Naive thymus-derived CD8-positive, alpha-beta T cell (primary cell): ENCODE measurements at regions of chr2 and their contacts with region 1.

Region 1: DNA sequence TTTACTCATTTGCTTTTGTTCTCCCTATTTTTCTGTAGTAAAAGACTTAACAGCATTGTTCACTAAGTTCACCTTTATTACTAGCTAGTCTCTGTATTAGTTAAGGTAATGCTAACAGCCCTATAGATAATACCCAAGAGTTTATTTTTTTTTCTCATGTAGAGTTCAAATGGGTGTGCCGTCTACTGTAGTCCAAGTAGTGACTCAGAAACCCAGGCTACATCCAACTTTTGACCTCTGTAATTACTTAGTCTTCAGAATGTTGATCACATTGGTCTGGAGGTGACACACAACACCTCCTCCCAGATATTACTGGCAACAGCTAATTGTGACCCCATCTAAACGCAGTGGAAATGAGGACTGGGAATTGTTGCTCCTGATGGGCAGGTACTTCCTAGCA is 7.7 kb downstream of the COQ10B start:
- DNase-seq: no peak
- ATAC-seq: no peak
- H3K4me3 Mint-ChIP-seq: no peak overlapping the region
- H3K27ac Mint-ChIP-seq: peak overlapping the region in 1 of 10 donors; percentile 53
- H3K4me1 Mint-ChIP-seq: peaks cover 11 to 42% (median 31%) of the 10 kb centered on the region in 4 donors
- H3K27me3 Mint-ChIP-seq: no peaks in the 10 kb centered on the region

Region 2: GRCh38 chr2:197416268-197416667 is 44.8 kb before region 1 on chr2:
- POLR2A ChIA-PET with region 1: interaction called, 10 read pairs
- DNase-seq: no peak
- ATAC-seq: no peak
- H3K4me3 Mint-ChIP-seq: no peak overlapping the region
- H3K27ac Mint-ChIP-seq: peak overlapping the region in 1 of 10 donors; percentile 64
- H3K4me1 Mint-ChIP-seq: peaks cover 4 to 21% (median 9%) of the 10 kb centered on the region in 4 donors
- H3K27me3 Mint-ChIP-seq: no peaks in the 10 kb centered on the region

Region 3: DNA sequence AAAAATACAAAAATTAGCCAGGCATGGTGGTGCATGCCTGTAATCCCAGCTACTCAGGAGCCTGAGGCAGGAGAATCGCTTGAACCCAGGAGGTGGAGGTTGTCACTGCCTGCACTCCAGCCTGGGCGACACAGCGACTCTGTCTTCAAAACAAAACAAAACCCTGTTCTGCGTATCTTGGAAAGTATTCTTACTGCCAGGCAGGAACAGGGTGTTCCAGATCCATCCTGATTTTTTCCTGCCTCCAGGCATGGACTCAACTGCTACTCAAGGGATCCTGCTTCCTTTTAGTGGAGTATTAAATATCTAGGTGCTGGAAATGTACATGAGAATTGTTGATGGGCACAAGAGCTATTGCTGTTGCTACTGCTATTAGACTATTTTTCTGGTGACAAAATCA is 26.3 kb after region 1 on chr2:
- POLR2A ChIA-PET with region 1: no interaction called
- DNase-seq: no peak
- ATAC-seq: no peak
- H3K4me3 Mint-ChIP-seq: no peak overlapping the region
- H3K27ac Mint-ChIP-seq: peak overlapping the region in 3 of 10 donors; percentile 0 to 47 (median 28)
- H3K4me1 Mint-ChIP-seq: peaks cover 0 to 6% (median 0%) of the 10 kb centered on the region in 4 donors
- H3K27me3 Mint-ChIP-seq: no peaks in the 10 kb centered on the region